Activated B cell treated with CpG ODN at 0.5 μM for 24 hours (primary cell): ENCODE measurements at regions of chr22 and their contacts with region 1.

Region 1: DNA sequence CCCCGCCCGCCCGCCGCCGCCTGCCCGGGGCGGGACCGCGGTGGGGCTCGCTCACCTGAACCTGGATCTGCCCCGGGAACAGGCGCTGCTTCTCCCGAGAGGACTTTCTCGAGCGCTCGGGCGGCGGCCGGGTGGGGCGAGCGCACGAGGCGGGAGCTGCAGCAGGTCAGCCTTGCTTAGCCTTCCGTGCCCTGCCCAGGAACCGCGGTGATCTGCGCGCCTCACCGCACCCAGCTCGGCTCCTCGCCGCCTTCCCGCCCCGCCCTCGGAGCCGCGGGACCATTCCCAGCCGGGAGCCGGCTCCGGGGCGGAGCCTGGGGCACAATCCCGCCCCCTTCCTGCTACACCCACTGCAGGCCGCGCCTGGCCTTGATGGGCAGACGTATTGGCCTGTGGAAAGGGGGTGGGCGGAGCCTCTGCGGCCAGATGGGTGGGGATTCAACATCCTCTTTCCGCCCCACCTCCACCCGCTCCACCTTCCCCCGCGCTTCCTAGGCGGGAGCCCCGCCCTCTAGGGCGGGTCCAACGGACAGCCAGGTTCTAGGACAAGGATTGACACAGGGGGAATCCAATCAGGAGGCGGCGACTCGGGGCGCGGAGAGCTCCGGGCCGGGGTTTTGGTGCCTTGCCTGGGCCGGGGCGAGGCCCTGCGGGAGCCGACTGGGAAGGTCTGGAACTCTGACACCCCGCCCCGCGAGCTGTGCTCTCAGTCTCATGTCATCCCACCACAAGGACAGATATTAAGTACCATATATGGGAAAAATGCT is at the start of gene MYH9:
- DNase-seq: peak; percentile 97
- ATAC-seq: peak; percentile 79
- H3K4me3 Mint-ChIP-seq: peak within 1 kb of the TSS; percentile 94
- H3K27ac Mint-ChIP-seq: peak within 1 kb of the TSS; percentile 97
- H3K4me1 Mint-ChIP-seq: peaks cover 64% of the 10 kb centered on the region
- H3K27me3 Mint-ChIP-seq: no peaks in the 10 kb centered on the region
- CTCF ChIP-seq: no peak
- total RNA-seq, gene MYH9: 714 and 755 TPM in 2 replicates

Region 2: GRCh38 chr22:36301384-36301828 is 86.5 kb before region 1 on chr22:
- CTCF ChIA-PET with region 1: interaction called, 6 read pairs
- POLR2A ChIA-PET with region 1: interaction called, 11 read pairs
- intact Hi-C with region 1: loop called (anchors 1 kb)
- DNase-seq: peak; percentile 74
- ATAC-seq: peak; percentile 89
- H3K4me3 Mint-ChIP-seq: no peak overlapping the region
- H3K27ac Mint-ChIP-seq: peak overlapping the region; percentile 21
- H3K4me1 Mint-ChIP-seq: peaks cover 7% of the 10 kb centered on the region
- H3K27me3 Mint-ChIP-seq: no peaks in the 10 kb centered on the region
- CTCF ChIP-seq: peak; percentile 70

Region 3: DNA sequence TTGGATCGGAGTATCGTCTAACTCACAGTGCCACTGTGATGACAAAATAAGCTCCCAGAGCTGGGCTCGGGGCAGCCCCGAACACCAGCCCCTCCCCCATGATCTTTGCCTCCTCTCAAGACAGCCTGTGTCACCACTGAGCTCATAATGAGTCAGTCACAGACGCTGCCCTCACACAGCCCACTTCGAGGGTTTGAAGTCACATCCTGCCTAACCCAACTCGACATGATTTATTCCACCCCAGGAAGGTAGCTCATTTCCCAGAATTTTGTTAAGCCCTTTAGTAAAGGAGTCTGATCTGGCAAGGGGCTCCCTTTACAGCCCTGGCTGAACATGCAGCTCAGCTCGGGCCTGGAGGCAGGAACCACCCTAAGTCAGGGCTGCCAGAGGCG is 22.9 kb before region 1 on chr22:
- CTCF ChIA-PET with region 1: interaction called, 4 read pairs
- POLR2A ChIA-PET with region 1: interaction called, 126 read pairs
- intact Hi-C with region 1: loop called (anchors 1 kb)
- DNase-seq: peak; percentile 51
- ATAC-seq: peak; percentile 96
- H3K4me3 Mint-ChIP-seq: peak overlapping the region; percentile 68
- H3K27ac Mint-ChIP-seq: peak overlapping the region; percentile 82
- H3K4me1 Mint-ChIP-seq: peaks cover 97% of the 10 kb centered on the region
- H3K27me3 Mint-ChIP-seq: no peaks in the 10 kb centered on the region
- CTCF ChIP-seq: no peak

Region 4: GRCh38 chr22:36398621-36399469 is 10.9 kb after region 1 on chr22:
- CTCF ChIA-PET with region 1: no interaction called
- POLR2A ChIA-PET with region 1: interaction called, 27 read pairs
- intact Hi-C with region 1: no loop called
- DNase-seq: no peak
- ATAC-seq: no peak
- H3K4me3 Mint-ChIP-seq: no peak overlapping the region
- H3K27ac Mint-ChIP-seq: no peak overlapping the region
- H3K4me1 Mint-ChIP-seq: peaks cover 43% of the 10 kb centered on the region
- H3K27me3 Mint-ChIP-seq: no peaks in the 10 kb centered on the region
- CTCF ChIP-seq: no peak

Region 5: DNA sequence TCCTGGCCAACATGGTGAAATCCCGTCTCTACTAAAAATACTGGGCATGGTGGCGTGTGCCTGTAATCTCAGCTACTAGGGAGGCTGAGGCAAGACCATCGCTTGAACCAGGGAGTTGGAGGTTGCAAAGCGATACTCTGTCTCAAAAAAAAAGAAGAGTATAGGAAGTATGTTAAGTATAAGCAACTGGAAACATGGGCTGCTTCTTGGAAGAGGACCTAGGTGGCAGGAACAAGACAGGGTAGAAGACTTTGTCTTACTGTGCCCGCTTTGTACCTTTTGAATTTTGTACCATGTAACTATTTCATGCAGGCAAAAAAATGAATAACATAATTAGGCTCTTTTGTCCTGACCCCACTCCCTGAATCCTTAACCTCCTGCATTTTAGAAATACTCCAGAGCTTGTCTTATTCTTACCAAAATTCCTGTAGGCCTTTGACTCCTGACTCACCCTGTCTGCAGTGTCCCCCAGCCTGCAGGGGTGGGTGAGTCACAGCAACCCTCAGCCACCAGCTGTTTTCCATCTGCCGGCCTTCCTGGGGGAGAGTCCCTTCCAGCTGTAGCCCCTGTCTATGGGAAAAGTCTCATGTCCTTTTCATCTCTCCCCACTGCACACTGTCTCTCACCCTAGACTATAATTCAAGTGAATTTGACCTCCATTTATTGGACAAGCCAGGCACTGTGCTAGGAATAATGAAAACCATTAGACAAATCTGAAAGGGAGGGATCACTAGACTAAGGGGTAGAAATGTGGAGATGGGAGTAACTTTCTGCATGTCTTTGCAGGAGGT is 51.7 kb after region 1 on chr22:
- CTCF ChIA-PET with region 1: no interaction called
- POLR2A ChIA-PET with region 1: interaction called, 6 read pairs
- intact Hi-C with region 1: loop called (anchors 5 kb)
- DNase-seq: no peak
- ATAC-seq: no peak
- H3K4me3 Mint-ChIP-seq: no peak overlapping the region
- H3K27ac Mint-ChIP-seq: no peak overlapping the region
- H3K4me1 Mint-ChIP-seq: peaks cover 49% of the 10 kb centered on the region
- H3K27me3 Mint-ChIP-seq: no peaks in the 10 kb centered on the region
- CTCF ChIP-seq: no peak

Region 6: GRCh38 chr22:36481393-36482168 is 93.6 kb after region 1 on chr22 and contains the start of gene TXN2:
- CTCF ChIA-PET with region 1: interaction called, 3 read pairs
- POLR2A ChIA-PET with region 1: interaction called, 10 read pairs
- intact Hi-C with region 1: loop called (anchors 1 kb)
- DNase-seq: peak; percentile 94
- ATAC-seq: peak; percentile 87
- H3K4me3 Mint-ChIP-seq: peak within 1 kb of the TSS; percentile 92
- H3K27ac Mint-ChIP-seq: peak within 1 kb of the TSS; percentile 91
- H3K4me1 Mint-ChIP-seq: peaks cover 18% of the 10 kb centered on the region
- H3K27me3 Mint-ChIP-seq: no peaks in the 10 kb centered on the region
- CTCF ChIP-seq: no peak
- total RNA-seq, gene TXN2: 59.1 and 71.7 TPM in 2 replicates

Region 7: GRCh38 chr22:36734171-36735058 is 346.5 kb after region 1 on chr22:
- CTCF ChIA-PET with region 1: no interaction called
- POLR2A ChIA-PET with region 1: no interaction called
- intact Hi-C with region 1: no loop called
- DNase-seq: no peak
- ATAC-seq: no peak
- H3K4me3 Mint-ChIP-seq: no peak overlapping the region
- H3K27ac Mint-ChIP-seq: no peak overlapping the region
- H3K4me1 Mint-ChIP-seq: no peaks in the 10 kb centered on the region
- H3K27me3 Mint-ChIP-seq: peaks cover 49% of the 10 kb centered on the region
- CTCF ChIP-seq: no peak